Heart left ventricle (tissue), 16 donors: ENCODE measurements at regions of chr7 and their contacts with region 1.

Region 1: DNA sequence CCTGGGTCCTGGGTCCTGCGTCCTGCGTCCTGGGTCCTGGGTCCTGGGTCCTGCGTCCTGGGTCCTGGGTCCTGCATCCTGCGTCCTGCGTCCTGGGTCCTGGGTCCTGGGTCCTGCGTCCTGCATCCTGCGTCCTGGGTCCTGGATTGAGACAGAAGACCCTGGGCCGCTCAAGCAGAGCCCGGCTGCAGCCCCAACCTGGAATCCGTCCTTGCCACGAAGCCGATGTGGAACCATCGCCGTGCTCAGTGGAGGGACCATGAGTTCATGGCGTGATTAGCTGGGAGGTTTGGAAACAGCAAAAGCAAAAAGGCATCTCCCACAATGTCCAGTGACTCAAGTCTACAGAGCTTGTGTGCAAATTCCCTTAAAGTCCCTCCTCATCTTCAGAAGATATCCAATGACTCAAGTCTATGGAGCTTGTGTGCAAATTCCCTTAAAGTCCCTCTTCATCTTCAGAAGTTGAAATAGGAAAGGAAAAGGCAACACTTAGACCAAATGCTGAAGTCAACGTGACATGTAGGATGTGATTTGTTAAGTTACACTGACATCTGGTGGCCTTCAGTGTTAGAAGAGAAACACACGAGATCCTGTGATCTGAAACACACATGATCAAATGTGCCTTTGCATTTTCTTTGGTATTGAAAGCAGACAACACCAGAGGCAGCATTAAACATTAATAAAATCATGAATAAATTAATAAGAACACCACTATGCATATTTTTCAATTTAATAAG is 179.9 kb downstream of the PTPRN2 start:
- DNase-seq: no peak
- ATAC-seq: peak in 1 of 4 donors; percentile 39
- H3K4me3 ChIP-seq: no peak overlapping the region
- H3K27ac ChIP-seq: no peak overlapping the region
- H3K4me1 ChIP-seq: no peaks in the 10 kb centered on the region
- H3K27me3 ChIP-seq: peaks cover 0 to 27% (median 0%) of the 10 kb centered on the region in 9 donors
- CTCF ChIP-seq: peak in 10 of 12 donors; percentile 24 to 58 (median 44)
- POLR2A ChIP-seq: no peak

Region 2: DNA sequence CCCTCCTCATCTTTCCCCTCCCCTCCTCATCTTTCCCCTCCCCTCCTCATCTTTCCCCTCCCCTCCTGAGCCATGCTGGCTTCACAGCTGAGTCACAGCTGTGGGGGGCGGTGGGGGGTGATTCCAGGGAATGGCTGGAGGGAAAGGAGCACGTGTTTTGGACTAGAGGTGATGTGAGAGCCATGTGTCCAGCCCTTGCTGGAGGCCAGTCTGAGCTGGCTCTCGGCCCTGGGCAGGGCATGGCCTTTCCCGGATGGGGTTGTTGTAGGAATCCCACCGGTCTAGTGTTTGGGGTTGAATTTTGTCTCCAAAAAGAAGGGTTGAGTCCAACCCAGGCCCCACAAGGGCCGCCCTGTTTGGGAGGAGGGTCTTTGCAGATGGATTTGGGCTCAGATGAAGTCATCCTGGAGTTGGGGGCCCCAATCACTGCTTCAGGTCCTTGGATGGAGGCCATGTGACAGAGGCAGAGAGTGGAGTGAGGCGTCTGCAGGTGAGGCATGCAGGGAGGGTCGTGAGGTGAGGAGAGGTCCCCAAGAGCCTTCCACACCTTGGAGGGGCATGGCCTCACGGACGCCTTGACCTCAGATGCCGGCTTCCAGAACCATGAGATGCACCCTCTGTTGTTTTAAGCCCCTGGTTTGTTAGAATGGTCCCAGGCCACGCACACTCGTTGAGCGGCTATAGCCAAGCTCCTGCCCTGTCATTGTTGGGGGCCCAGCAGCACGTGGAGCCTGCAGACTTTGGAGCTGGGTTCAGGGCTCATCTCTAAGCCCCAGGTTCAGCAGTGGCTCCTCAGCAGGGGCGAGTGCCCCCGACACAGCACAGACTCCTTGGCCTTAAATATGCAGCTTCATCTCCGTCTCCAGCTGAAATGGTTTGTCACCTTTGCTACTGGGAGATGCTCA is 969.4 kb before region 1 on chr7:
- intact Hi-C with region 1: loop called in 5 of 10 experiments (anchors 5 to 10 kb)
- DNase-seq: peak in 1 of 5 donors; percentile 9
- ATAC-seq: no peak
- H3K4me3 ChIP-seq: no peak overlapping the region
- H3K27ac ChIP-seq: no peak overlapping the region
- H3K4me1 ChIP-seq: no peaks in the 10 kb centered on the region
- H3K27me3 ChIP-seq: no peaks in the 10 kb centered on the region
- CTCF ChIP-seq: no peak
- POLR2A ChIP-seq: no peak

Region 3: GRCh38 chr7:157974410-157975230 is 433.1 kb before region 1 on chr7:
- intact Hi-C with region 1: no loop called
- DNase-seq: peak in 1 of 5 donors; percentile 47
- ATAC-seq: no peak
- H3K4me3 ChIP-seq: no peak overlapping the region
- H3K27ac ChIP-seq: no peak overlapping the region
- H3K4me1 ChIP-seq: no peaks in the 10 kb centered on the region
- H3K27me3 ChIP-seq: peaks cover 0 to 12% (median 0%) of the 10 kb centered on the region in 9 donors
- CTCF ChIP-seq: no peak
- POLR2A ChIP-seq: no peak

Region 4: DNA sequence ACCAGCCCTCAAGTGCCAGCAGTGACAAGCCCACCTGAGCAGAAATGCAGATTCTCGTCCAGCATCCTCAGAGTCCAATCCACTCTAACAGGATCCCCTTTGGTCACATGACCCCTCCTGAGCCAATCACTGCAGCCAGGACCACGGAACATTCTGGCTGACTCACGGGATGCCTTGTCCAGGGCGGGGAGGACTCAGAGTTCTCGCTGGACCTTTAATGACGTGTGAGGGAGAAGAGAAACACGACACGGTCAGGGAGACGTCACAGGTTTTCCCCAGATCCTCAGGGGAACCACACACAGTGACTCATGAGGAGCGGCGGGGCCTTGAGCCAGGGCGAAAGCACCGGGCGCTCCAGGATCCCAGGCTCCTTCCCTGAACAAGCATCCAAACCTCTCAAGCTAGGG is 24.2 kb after region 1 on chr7:
- intact Hi-C with region 1: no loop called
- DNase-seq: peak in 2 of 5 donors; percentile 46 to 72
- ATAC-seq: peak; percentile 73 to 97 (median 82)
- H3K4me3 ChIP-seq: no peak overlapping the region
- H3K27ac ChIP-seq: peak overlapping the region in 1 of 12 donors; percentile 78
- H3K4me1 ChIP-seq: no peaks in the 10 kb centered on the region
- H3K27me3 ChIP-seq: peaks cover 0 to 22% (median 0%) of the 10 kb centered on the region in 9 donors
- CTCF ChIP-seq: no peak
- POLR2A ChIP-seq: no peak